Activated CD4-positive, alpha-beta memory T cell treated with anti-CD3 and anti-CD28 coated beads, Interleukin-2, amount 10 ng/mL, durations not matched to agents 7 days and 5 days (primary cell): ENCODE measurements at regions of chr5 and their contacts with region 1.

Region 1: GRCh38 chr5:134648425-134649162 is at the start of gene SEC24A:
- DNase-seq: peak; percentile 92
- H3K4me3 Mint-ChIP-seq: peak within 1 kb of the TSS; percentile 86
- H3K27ac Mint-ChIP-seq: peak within 1 kb of the TSS; percentile 94
- H3K4me1 Mint-ChIP-seq: peaks cover 28% of the 10 kb centered on the region
- H3K27me3 Mint-ChIP-seq: no peaks in the 10 kb centered on the region
- total RNA-seq, gene SEC24A: 29.3 to 29.6 TPM

Region 2: GRCh38 chr5:134430001-134430569 is 218.5 kb before region 1 on chr5:
- CTCF ChIA-PET with region 1: no interaction called
- POLR2A ChIA-PET with region 1: no interaction called
- DNase-seq: no peak
- H3K4me3 Mint-ChIP-seq: no peak overlapping the region
- H3K27ac Mint-ChIP-seq: no peak overlapping the region
- H3K4me1 Mint-ChIP-seq: peaks cover 12% of the 10 kb centered on the region
- H3K27me3 Mint-ChIP-seq: peaks cover 12% of the 10 kb centered on the region

Region 3: GRCh38 chr5:134609232-134609851 is 39.3 kb before region 1 on chr5:
- CTCF ChIA-PET with region 1: no interaction called
- POLR2A ChIA-PET with region 1: interaction called, 19 read pairs
- DNase-seq: no peak
- H3K4me3 Mint-ChIP-seq: peak overlapping the region; percentile 21
- H3K27ac Mint-ChIP-seq: peak overlapping the region; percentile 92
- H3K4me1 Mint-ChIP-seq: peaks cover 52% of the 10 kb centered on the region
- H3K27me3 Mint-ChIP-seq: no peaks in the 10 kb centered on the region

Region 4: GRCh38 chr5:134637161-134637582 is 11.4 kb before region 1 on chr5:
- CTCF ChIA-PET with region 1: interaction called, 9 read pairs
- POLR2A ChIA-PET with region 1: interaction called, 86 read pairs
- DNase-seq: no peak
- H3K4me3 Mint-ChIP-seq: no peak overlapping the region
- H3K27ac Mint-ChIP-seq: no peak overlapping the region
- H3K4me1 Mint-ChIP-seq: peaks cover 14% of the 10 kb centered on the region
- H3K27me3 Mint-ChIP-seq: no peaks in the 10 kb centered on the region

Region 5: DNA sequence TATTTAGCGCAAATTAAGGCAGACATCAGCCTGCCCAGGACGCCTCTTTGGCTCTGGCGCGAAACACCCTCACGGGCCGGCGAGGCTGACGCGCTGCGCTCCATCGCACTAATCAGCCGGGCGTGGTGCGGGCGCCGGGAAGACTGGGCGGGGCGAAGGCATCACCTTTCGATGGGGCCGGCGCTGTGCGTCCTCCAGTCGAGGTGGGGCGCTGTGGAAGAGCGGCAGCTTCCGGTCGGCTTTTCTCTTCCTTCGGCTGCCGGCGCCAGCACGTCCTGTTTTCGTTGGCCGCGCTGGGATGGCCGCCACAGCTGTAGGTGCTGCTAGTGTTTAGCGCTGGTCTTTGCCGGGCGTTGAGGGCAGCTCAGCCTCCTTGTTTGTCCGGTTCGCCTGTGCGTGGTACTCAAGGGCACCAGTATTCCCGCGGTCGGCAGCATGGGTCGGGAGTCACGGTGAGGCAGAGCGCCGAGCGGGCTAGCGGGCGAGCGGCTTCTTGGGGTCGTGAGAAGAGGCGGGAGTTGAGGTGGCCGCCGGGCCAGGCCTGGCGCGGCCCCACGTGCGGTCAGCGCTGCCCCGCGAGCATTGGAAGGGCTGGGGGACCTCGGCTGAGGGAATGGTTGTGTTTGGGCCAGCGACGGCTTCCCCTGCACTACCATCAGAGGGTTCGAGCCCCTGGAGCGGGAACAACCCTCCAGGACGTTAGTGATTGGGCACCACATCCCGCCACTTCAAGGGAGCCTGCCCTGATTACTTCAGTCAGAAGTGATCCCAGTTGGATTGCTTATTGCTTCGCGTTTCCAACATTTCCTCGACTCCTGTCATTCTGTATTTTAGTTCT is 110.1 kb after region 1 on chr5 and contains the start of gene DDX46:
- CTCF ChIA-PET with region 1: interaction called, 3 read pairs
- POLR2A ChIA-PET with region 1: interaction called, 16 read pairs
- DNase-seq: peak; percentile 95
- H3K4me3 Mint-ChIP-seq: peak within 1 kb of the TSS; percentile 95
- H3K27ac Mint-ChIP-seq: peak within 1 kb of the TSS; percentile 88
- H3K4me1 Mint-ChIP-seq: peaks cover 38% of the 10 kb centered on the region
- H3K27me3 Mint-ChIP-seq: no peaks in the 10 kb centered on the region
- total RNA-seq, gene DDX46: 51.8 to 56.7 TPM

Region 6: DNA sequence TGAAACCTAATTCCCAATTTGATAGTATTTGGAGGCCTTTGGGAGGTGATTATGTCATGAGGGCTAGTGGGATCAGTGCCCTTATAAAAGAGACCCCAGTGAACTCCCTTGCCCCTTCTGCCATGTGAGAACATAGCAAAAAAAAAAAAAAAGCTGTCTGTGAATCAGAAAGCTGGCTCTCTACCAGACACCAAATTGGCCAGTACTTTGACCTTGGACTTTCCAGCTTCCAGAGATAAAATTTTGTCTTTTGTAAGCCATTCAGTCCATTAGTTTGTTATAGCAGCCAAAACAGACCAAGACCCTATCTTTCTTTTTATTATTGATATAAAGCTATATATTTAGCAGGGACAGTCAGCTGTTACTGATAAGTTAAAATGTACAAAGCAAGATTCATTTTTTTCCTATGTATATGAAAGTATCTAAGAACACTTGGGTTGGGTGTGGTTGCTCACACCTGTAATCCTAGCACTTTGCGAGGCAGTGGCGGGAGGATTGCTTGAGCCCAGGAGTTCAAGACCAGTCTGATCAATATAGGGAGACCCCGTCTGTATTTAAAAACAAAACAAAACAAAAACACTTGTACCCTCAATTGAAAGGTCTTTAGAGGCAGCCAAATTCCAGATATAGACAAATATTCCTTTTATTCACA is 189.1 kb after region 1 on chr5:
- CTCF ChIA-PET with region 1: no interaction called
- POLR2A ChIA-PET with region 1: no interaction called
- DNase-seq: no peak
- H3K4me3 Mint-ChIP-seq: no peak overlapping the region
- H3K27ac Mint-ChIP-seq: no peak overlapping the region
- H3K4me1 Mint-ChIP-seq: no peaks in the 10 kb centered on the region
- H3K27me3 Mint-ChIP-seq: no peaks in the 10 kb centered on the region